Breast epithelium (tissue), 4 donors: ENCODE measurements at regions of chr3 and their contacts with region 1.

Region 1: GRCh38 chr3:143389388-143389787 is 269.8 kb downstream of the CHST2 start:
- DNase-seq: no peak
- H3K4me3 ChIP-seq: no peak overlapping the region
- H3K27ac ChIP-seq: no peak overlapping the region
- H3K4me1 ChIP-seq: no peaks in the 10 kb centered on the region
- H3K27me3 ChIP-seq: no peaks in the 10 kb centered on the region
- CTCF ChIP-seq: no peak
- POLR2A ChIP-seq: no peak

Region 2: GRCh38 chr3:143875546-143875945 is 486.2 kb after region 1 on chr3:
- intact Hi-C with region 1: loop called (anchors 5 kb)
- DNase-seq: no peak
- H3K4me3 ChIP-seq: no peak overlapping the region
- H3K27ac ChIP-seq: no peak overlapping the region
- H3K4me1 ChIP-seq: no peaks in the 10 kb centered on the region
- H3K27me3 ChIP-seq: no peaks in the 10 kb centered on the region
- CTCF ChIP-seq: no peak
- POLR2A ChIP-seq: no peak